Transverse colon (tissue), 4 donors: ENCODE measurements at regions of chr5 and their contacts with region 1.

Region 1: GRCh38 chr5:36305571-36306326 is 4.0 kb upstream of the RANBP3L start:
- DNase-seq: peak; percentile 39
- H3K4me3 ChIP-seq: no peak overlapping the region
- H3K27ac ChIP-seq: no peak overlapping the region
- H3K4me1 ChIP-seq: peaks cover 5 to 24% (median 17%) of the 10 kb centered on the region in 4 donors
- H3K27me3 ChIP-seq: no peaks in the 10 kb centered on the region
- CTCF ChIP-seq: peak; percentile 49 to 65 (median 58)
- EP300 ChIP-seq: no peak
- POLR2A ChIP-seq: no peak

Region 2: DNA sequence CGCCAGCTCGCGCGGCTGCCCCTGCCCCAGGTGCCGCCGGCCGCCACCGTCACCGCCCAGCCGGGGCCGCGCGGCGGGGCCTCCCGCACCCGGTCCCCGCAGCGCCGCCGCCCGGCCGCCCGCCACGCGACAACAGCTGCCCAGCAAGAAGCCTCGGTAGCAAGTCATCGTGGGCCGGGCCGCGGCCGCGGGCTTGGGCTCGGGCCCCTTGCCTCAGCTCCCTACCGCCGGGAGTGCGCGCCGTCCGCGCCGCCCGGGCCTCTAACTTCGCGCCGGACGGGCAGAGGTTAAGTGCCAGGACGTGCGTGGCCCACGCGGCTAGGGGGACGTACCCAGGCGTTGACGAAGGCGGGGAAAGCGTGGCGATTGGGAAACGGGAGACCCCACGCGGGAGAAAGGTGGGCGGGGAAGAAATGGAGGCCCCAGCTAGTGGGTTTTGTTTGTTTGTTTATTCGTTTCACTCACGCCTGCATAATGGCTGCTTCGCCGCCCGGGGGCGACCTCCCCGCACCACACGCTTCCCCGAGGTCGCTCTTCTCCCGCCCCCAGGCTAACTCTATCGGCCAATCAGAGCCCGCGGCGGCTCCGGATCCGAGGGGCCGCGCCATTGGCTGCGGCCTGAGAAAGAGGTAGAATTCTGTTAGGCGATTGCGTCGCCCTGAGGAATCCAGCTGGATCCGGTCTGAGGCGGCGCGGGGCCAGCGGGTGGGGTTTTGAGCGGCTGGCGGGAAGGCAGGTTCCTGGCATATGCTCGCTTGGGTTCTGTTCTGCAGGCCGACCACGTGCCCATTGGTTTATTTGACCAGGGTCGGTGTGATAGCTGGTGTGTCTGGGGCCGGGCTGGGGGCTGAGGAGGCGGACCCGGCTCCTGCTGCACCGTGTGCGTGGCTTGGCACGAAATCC is 63.9 kb before region 1 on chr5 and contains the start of gene NADK2:
- in situ Hi-C with region 1: no loop called
- intact Hi-C with region 1: loop called (anchors 2 kb)
- DNase-seq: peak; percentile 95
- H3K4me3 ChIP-seq: peak within 1 kb of the TSS; percentile 87 to 98 (median 91)
- H3K27ac ChIP-seq: peak within 1 kb of the TSS; percentile 98 to 99 (median 99)
- H3K4me1 ChIP-seq: peaks cover 21 to 46% (median 36%) of the 10 kb centered on the region in 4 donors
- H3K27me3 ChIP-seq: no peaks in the 10 kb centered on the region
- CTCF ChIP-seq: peak; percentile 51 to 75 (median 64)
- EP300 ChIP-seq: peak; percentile 59
- POLR2A ChIP-seq: peak; percentile 62
- total RNA-seq, gene NADK2: 14.6 to 31.4 (median 22.4) TPM

Region 3: GRCh38 chr5:36269479-36270219 is 36.1 kb before region 1 on chr5:
- in situ Hi-C with region 1: no loop called
- intact Hi-C with region 1: loop called (anchors 1 kb)
- DNase-seq: no peak
- H3K4me3 ChIP-seq: no peak overlapping the region
- H3K27ac ChIP-seq: no peak overlapping the region
- H3K4me1 ChIP-seq: peaks cover 0 to 4% (median 0%) of the 10 kb centered on the region in 4 donors
- H3K27me3 ChIP-seq: no peaks in the 10 kb centered on the region
- CTCF ChIP-seq: no peak
- EP300 ChIP-seq: no peak
- POLR2A ChIP-seq: no peak

Region 4: GRCh38 chr5:37501012-37501551 is 1195.3 kb after region 1 on chr5:
- in situ Hi-C with region 1: no loop called
- intact Hi-C with region 1: no loop called
- DNase-seq: no peak
- H3K4me3 ChIP-seq: no peak overlapping the region
- H3K27ac ChIP-seq: no peak overlapping the region
- H3K4me1 ChIP-seq: no peaks in the 10 kb centered on the region
- H3K27me3 ChIP-seq: no peaks in the 10 kb centered on the region
- CTCF ChIP-seq: no peak
- EP300 ChIP-seq: no peak
- POLR2A ChIP-seq: no peak